B cell (primary cell): ENCODE measurements at regions of chr3 and their contacts with region 1.

Region 1: GRCh38 chr3:59262076-59262498 is 212.3 kb upstream of the CFAP20DC start:
- DNase-seq: peak; percentile 67
- ATAC-seq: peak; percentile 83
- H3K4me3 ChIP-seq: peak overlapping the region in 1 of 5 experiments; percentile 44
- H3K4me3 Mint-ChIP-seq: peak overlapping the region; percentile 79
- H3K27ac ChIP-seq: peak overlapping the region in 1 of 2 donors; percentile 24
- H3K27ac Mint-ChIP-seq: peak overlapping the region; percentile 77
- H3K4me1 ChIP-seq: peaks cover 17 to 20% of the 10 kb centered on the region in 2 donors
- H3K4me1 Mint-ChIP-seq: peaks cover 25% of the 10 kb centered on the region
- H3K27me3 ChIP-seq: no peaks in the 10 kb centered on the region
- H3K27me3 Mint-ChIP-seq: no peaks in the 10 kb centered on the region
- CTCF ChIP-seq: no peak

Region 2: DNA sequence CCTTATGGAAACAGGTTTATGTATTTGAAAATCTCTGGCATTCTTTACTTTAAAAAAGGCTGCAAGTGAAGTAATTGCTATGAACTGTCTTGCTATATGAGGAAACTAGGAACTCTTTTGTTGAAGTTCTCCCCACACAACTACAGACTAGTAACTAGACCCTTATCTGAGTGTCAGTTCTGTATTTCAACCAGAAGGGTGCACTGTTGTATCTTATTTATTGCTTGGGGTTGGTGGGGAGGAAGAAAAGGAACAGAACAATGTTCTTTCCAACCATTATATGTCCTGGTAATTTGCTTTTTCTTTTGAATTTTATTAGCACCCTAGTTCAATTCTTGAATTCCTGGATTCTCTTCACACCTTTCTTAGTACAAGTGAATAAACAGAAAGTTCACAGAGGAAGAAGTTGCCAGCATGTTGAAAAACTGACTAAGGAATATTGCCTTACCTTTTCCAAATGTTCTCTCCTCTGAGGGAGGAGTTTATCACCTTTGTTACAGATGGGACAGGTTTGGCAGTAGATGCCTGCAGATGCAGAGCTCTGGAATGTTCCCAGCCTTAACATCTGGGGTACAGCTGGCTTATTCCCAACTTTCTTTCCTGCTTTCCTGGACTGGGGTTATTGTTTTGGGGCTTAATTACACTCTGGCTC is 49.8 kb before region 1 on chr3:
- CTCF ChIA-PET with region 1: no interaction called
- POLR2A ChIA-PET with region 1: no interaction called
- intact Hi-C with region 1: no loop called
- DNase-seq: peak; percentile 50
- ATAC-seq: no peak
- H3K4me3 ChIP-seq: no peak overlapping the region
- H3K4me3 Mint-ChIP-seq: no peak overlapping the region
- H3K27ac ChIP-seq: no peak overlapping the region
- H3K27ac Mint-ChIP-seq: no peak overlapping the region
- H3K4me1 ChIP-seq: no peaks in the 10 kb centered on the region
- H3K4me1 Mint-ChIP-seq: no peaks in the 10 kb centered on the region
- H3K27me3 ChIP-seq: no peaks in the 10 kb centered on the region
- H3K27me3 Mint-ChIP-seq: peaks cover 9% of the 10 kb centered on the region
- CTCF ChIP-seq: peak; percentile 81

Region 3: DNA sequence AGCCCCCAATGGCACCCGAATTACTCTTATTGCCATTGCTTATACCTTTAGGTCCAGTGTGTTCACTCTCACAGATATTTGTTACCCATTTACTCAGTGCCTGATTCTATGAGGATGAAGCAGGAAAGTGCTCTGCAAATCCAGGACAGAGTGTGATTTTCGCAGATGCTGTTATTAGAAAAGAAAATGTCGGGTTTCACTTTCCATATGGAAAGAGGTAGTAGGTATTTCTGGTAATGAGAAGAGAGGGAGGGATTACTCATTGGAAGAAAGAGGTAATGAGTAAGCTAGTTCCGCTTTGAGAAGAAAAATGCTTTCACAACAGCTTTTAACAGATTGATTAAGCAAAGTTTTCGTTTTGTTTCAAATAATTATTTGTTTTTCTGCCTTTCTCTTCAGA is 124.1 kb after region 1 on chr3:
- CTCF ChIA-PET with region 1: no interaction called
- POLR2A ChIA-PET with region 1: no interaction called
- intact Hi-C with region 1: loop called (anchors 1 kb)
- DNase-seq: peak; percentile 43
- ATAC-seq: peak; percentile 56
- H3K4me3 ChIP-seq: no peak overlapping the region
- H3K4me3 Mint-ChIP-seq: peak overlapping the region; percentile 79
- H3K27ac ChIP-seq: no peak overlapping the region
- H3K27ac Mint-ChIP-seq: peak overlapping the region; percentile 84
- H3K4me1 ChIP-seq: peaks cover 2 to 20% of the 10 kb centered on the region in 2 donors
- H3K4me1 Mint-ChIP-seq: peaks cover 23% of the 10 kb centered on the region
- H3K27me3 ChIP-seq: no peaks in the 10 kb centered on the region
- H3K27me3 Mint-ChIP-seq: no peaks in the 10 kb centered on the region
- CTCF ChIP-seq: no peak